ENCODE measurements at regions of chr5 and their contacts with region 1.

Region 1: GRCh38 chr5:143395638-143396352 is 7.7 kb downstream of the NR3C1 start:
- DNase-seq: peak; percentile 49
- H3K4me3 Mint-ChIP-seq: peak overlapping the region; percentile 98
- H3K27ac Mint-ChIP-seq: peak overlapping the region; percentile 99
- H3K4me1 Mint-ChIP-seq: peaks cover 49% of the 10 kb centered on the region
- H3K27me3 Mint-ChIP-seq: no peaks in the 10 kb centered on the region
- CTCF ChIP-seq: no peak

Region 2: DNA sequence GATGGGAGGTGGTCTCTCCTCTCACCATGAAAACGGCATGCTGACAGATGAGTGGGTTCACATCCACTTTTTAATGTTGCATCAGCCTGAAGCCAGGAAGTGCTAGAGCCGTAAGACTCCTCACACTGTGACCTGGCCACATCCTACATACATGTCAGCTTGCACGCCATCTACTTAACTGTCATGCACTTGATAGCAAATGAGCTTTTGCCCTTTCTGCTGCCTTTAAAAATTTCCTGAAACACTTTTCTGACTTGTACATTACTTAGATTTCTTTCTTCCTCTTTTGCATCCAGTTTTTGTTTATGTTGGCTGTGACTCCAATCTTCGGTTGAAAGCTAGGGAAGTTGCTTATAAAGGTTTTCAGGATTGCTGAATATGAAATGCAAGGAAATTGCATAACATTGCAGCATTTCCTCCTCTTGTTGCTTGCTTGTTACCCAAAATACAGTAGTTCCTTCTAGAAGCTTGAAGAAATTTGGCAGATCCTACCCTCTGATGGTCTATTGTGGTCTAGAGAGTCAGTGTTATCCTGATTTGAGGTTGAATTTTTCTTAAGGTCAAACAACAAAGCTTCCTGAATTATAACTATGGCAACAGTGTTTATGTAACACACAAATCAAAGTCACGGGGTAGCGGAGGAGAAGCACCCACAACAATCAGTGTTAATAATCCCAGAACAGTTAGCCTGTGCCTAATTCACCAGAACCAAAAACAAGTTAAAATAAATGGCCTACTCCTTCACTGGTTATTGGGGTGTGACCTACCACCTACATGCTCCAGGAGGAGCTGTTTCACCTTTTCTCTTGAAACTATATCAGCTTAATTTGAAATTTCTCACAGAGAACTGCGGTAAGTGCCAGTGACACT is 393.1 kb before region 1 on chr5:
- CTCF ChIA-PET with region 1: interaction called, 9 read pairs
- POLR2A ChIA-PET with region 1: interaction called, 41 read pairs
- intact Hi-C with region 1: no loop called
- DNase-seq: peak; percentile 96
- H3K4me3 Mint-ChIP-seq: no peak overlapping the region
- H3K27ac Mint-ChIP-seq: peak overlapping the region; percentile 92
- H3K4me1 Mint-ChIP-seq: peaks cover 29% of the 10 kb centered on the region
- H3K27me3 Mint-ChIP-seq: no peaks in the 10 kb centered on the region
- CTCF ChIP-seq: peak; percentile 72

Region 3: DNA sequence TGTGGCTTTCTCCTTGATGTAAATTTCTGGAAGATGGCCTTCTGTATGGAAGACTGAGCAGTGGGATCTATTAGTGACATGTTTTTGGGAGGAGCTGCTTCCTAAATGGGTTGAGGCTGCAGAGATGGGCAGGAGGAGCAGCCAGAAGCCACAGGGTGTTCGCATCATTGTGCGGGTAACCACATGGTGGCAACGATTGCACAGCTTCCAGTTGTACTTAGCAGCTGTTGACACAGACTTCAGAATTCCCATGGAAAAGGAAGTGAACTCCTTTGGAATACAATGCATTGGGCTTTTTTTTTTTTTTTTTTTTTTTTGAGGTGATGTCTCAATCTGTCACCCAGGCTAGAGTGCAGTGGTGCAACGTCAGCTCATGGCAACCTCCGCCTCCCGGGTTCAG is 289.6 kb before region 1 on chr5:
- CTCF ChIA-PET with region 1: interaction called, 3 read pairs
- POLR2A ChIA-PET with region 1: interaction called, 3 read pairs
- intact Hi-C with region 1: loop called (anchors 1 kb)
- DNase-seq: peak; percentile 79
- H3K4me3 Mint-ChIP-seq: no peak overlapping the region
- H3K27ac Mint-ChIP-seq: no peak overlapping the region
- H3K4me1 Mint-ChIP-seq: peaks cover 5% of the 10 kb centered on the region
- H3K27me3 Mint-ChIP-seq: no peaks in the 10 kb centered on the region
- CTCF ChIP-seq: peak; percentile 33

Region 4: GRCh38 chr5:143244000-143244736 is 151.6 kb before region 1 on chr5:
- CTCF ChIA-PET with region 1: interaction called, 4 read pairs
- POLR2A ChIA-PET with region 1: interaction called, 94 read pairs
- intact Hi-C with region 1: loop called (anchors 1 kb)
- DNase-seq: peak; percentile 98
- H3K4me3 Mint-ChIP-seq: peak overlapping the region; percentile 54
- H3K27ac Mint-ChIP-seq: peak overlapping the region; percentile 84
- H3K4me1 Mint-ChIP-seq: peaks cover 61% of the 10 kb centered on the region
- H3K27me3 Mint-ChIP-seq: no peaks in the 10 kb centered on the region
- CTCF ChIP-seq: no peak

Region 5: GRCh38 chr5:143355720-143356119 is 40.1 kb before region 1 on chr5:
- CTCF ChIA-PET with region 1: interaction called, 4 read pairs
- POLR2A ChIA-PET with region 1: interaction called, 24 read pairs
- intact Hi-C with region 1: loop called (anchors 1 kb)
- DNase-seq: peak; percentile 98
- H3K4me3 Mint-ChIP-seq: no peak overlapping the region
- H3K27ac Mint-ChIP-seq: peak overlapping the region; percentile 44
- H3K4me1 Mint-ChIP-seq: peaks cover 43% of the 10 kb centered on the region
- H3K27me3 Mint-ChIP-seq: no peaks in the 10 kb centered on the region
- CTCF ChIP-seq: no peak

Region 6: DNA sequence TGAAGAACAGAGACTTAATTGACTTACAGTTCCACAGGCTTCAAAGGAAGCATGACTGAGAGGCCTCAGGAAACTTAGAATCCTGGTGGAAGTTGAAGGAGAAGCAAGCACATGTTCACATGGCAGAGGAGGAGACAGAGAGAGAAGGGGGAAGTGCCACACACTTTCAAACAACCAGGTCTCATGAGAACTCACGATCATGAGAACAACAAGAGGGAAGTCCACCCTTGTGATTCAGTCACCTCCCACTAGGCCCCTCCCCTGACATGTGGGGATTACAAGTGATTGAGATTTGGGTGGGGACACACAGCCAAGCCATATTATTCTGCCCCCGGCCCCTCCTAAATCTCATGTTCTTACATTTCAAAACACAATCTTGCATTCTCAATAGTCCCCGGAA is 11.8 kb before region 1 on chr5:
- CTCF ChIA-PET with region 1: interaction called, 5 read pairs
- POLR2A ChIA-PET with region 1: interaction called, 116 read pairs
- intact Hi-C with region 1: no loop called
- DNase-seq: no peak
- H3K4me3 Mint-ChIP-seq: no peak overlapping the region
- H3K27ac Mint-ChIP-seq: no peak overlapping the region
- H3K4me1 Mint-ChIP-seq: peaks cover 31% of the 10 kb centered on the region
- H3K27me3 Mint-ChIP-seq: no peaks in the 10 kb centered on the region
- CTCF ChIP-seq: no peak

Region 7: DNA sequence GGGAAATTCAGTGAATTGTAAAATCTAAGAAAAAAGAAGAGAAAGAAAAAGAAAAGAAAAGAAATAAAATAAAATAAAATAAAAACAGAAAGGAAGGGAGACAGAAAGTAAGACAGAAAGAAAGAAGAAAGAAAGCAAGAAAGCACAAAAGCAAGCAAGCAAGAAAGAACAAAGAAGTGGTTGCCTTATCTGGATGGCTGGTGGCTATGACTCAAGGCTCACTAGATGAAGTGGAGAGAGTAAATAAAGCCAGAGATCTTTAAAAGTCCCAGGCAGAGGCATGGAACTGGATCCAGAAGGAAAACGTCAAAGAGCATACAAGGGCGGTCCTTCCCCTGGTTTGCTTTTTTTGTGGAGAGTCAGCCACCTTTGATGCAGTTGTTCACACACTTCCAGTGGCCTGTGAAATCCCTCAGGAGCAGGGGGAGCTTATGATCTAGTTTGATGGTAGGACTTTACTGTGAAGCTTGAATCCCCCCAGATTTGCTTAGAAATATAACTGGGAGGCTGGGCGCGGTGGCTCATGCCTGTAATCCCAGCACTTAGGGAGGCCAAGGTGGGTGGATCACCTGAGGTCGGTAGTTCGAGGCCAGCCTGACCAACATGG is 239.5 kb after region 1 on chr5:
- CTCF ChIA-PET with region 1: no interaction called
- POLR2A ChIA-PET with region 1: no interaction called
- intact Hi-C with region 1: no loop called
- DNase-seq: no peak
- H3K4me3 Mint-ChIP-seq: no peak overlapping the region
- H3K27ac Mint-ChIP-seq: no peak overlapping the region
- H3K4me1 Mint-ChIP-seq: peaks cover 1% of the 10 kb centered on the region
- H3K27me3 Mint-ChIP-seq: no peaks in the 10 kb centered on the region
- CTCF ChIP-seq: no peak

Region 8: DNA sequence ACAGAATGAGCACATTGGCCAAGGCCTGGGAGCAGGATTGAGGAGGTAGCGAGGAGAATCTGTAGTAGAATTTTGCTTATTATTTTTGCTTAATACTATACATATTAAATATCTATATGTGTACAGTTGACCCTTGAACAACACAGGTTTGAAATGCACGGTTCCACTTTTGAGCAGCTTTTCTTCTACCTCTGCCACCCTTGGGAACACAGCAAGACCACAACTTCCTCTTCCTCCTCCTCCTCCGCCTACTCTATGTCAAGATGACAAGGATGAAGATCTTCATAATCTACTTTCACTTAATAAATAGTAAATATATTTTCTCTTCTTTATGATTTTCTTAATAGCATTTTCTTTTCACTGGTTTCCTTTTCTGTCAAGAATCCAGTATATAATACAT is 1316.3 kb after region 1 on chr5:
- CTCF ChIA-PET with region 1: no interaction called
- POLR2A ChIA-PET with region 1: no interaction called
- intact Hi-C with region 1: no loop called
- DNase-seq: no peak
- H3K4me3 Mint-ChIP-seq: no peak overlapping the region
- H3K27ac Mint-ChIP-seq: no peak overlapping the region
- H3K4me1 Mint-ChIP-seq: no peaks in the 10 kb centered on the region
- H3K27me3 Mint-ChIP-seq: no peaks in the 10 kb centered on the region
- CTCF ChIP-seq: no peak

Measured in MCF 10A (cell line).